GM18951 (cell line): ENCODE measurements at regions of chr7 and their contacts with region 1.

Region 1: DNA sequence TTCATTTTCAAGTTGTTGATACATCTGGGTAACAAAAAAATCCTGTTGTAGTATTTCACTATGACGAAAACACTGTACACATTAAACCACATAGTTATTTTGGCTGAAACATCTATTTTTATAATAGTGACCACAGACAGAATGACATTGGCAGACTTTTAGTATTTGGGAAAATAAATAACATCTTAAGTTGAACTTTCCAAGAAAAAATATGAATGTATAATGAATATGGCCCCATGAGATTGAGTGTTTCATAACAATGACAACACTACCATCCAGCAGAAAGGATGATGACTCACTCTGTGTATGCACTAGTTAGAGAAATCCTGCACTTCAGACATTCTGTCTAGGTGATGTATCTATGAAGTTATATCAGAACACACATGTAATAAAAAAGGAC is 118.1 kb downstream of the SEMA3D start:
- POLR2A ChIP-seq: no peak

Region 2: GRCh38 chr7:85554236-85555178 is 485.7 kb after region 1 on chr7:
- in situ Hi-C with region 1: loop called (anchors 25 kb)
- POLR2A ChIP-seq: no peak